CD4-positive, alpha-beta T cell (primary cell): ENCODE measurements at regions of chr10 and their contacts with region 1.

Region 1: GRCh38 chr10:22340362-22341189 is 4.7 kb upstream of the SPAG6 start:
- DNase-seq: peak in 10 of 14 experiments; percentile 12 to 78 (median 49)
- ATAC-seq: peak; percentile 37
- H3K4me3 ChIP-seq: peak overlapping the region; percentile 67
- H3K4me3 Mint-ChIP-seq: peak overlapping the region; percentile 91
- H3K27ac ChIP-seq: no peak overlapping the region
- H3K27ac Mint-ChIP-seq: peak overlapping the region; percentile 89
- H3K4me1 ChIP-seq: peaks cover 38% of the 10 kb centered on the region
- H3K4me1 Mint-ChIP-seq: peaks cover 38% of the 10 kb centered on the region
- H3K27me3 ChIP-seq: peaks cover 61 to 98% of the 10 kb centered on the region in 2 experiments
- H3K27me3 Mint-ChIP-seq: peaks cover 86% of the 10 kb centered on the region
- CTCF ChIP-seq: no peak

Region 2: DNA sequence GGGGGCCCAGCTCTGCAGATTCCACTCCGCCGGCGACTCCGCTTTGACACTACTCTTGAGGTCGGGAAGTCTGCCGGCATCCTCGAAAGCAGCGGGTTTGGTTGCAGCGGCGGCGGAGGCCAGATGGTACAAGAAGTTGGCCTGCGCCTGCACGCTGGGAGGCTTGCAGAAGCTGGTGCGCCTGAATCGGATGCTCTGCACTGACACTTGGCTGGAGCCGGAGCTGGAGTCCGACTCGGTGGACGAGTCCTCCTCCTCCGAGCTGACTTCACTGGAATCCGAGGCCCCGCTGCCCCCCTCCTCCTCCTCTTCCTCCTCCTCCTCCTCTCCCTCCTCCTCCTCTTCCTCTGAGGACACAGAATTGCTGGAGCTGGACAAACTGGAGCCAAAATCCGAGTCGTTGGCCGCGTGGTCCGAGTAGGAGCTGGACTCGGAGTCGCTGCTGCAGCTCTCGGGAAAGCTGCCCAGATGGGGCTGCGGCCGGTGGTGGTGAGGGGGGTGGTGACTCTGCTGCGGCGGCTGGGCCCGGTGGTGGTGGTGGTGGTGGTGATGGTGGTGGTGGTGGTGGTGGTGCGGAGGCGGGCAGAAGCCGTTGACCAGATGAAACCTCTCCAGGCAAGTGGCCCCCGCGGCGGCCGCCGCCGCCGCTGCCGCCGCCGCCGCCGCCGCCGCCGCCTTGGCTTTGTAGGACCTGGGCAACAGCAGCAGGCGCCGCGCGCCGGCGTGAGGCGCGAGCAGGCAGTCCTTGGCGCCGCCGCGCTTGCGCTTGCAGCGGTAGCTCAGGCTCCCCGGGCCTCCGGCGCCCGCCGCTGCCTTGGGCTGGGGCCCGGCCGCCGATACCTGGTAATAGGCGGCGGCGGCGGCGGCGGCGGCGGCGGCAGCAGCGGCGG is 824.1 kb before region 1 on chr10:
- CTCF ChIA-PET with region 1: no interaction called
- POLR2A ChIA-PET with region 1: no interaction called
- intact Hi-C with region 1: loop called in 1 of 2 experiments (anchors 5 kb)
- DNase-seq: peak in 9 of 14 experiments; percentile 31 to 83 (median 54)
- ATAC-seq: peak; percentile 66
- H3K4me3 ChIP-seq: peak overlapping the region; percentile 39
- H3K4me3 Mint-ChIP-seq: peak overlapping the region; percentile 77
- H3K27ac ChIP-seq: no peak overlapping the region
- H3K27ac Mint-ChIP-seq: no peak overlapping the region
- H3K4me1 ChIP-seq: peaks cover 39% of the 10 kb centered on the region
- H3K4me1 Mint-ChIP-seq: peaks cover 44% of the 10 kb centered on the region
- H3K27me3 ChIP-seq: peaks cover 58 to 84% of the 10 kb centered on the region in 2 experiments
- H3K27me3 Mint-ChIP-seq: peaks cover 92% of the 10 kb centered on the region
- CTCF ChIP-seq: no peak

Region 3: GRCh38 chr10:22251751-22252223 is 88.8 kb before region 1 on chr10:
- CTCF ChIA-PET with region 1: interaction called, 3 read pairs
- POLR2A ChIA-PET with region 1: interaction called, 10 read pairs
- intact Hi-C with region 1: loop called in 1 of 2 experiments (anchors 5 kb)
- DNase-seq: peak; percentile 46 to 82 (median 66)
- ATAC-seq: peak; percentile 57
- H3K4me3 ChIP-seq: peak overlapping the region; percentile 76
- H3K4me3 Mint-ChIP-seq: peak overlapping the region; percentile 96
- H3K27ac ChIP-seq: peak overlapping the region; percentile 71 to 76
- H3K27ac Mint-ChIP-seq: peak overlapping the region; percentile 97
- H3K4me1 ChIP-seq: peaks cover 10% of the 10 kb centered on the region
- H3K4me1 Mint-ChIP-seq: peaks cover 56% of the 10 kb centered on the region
- H3K27me3 ChIP-seq: peaks cover 0 to 7% of the 10 kb centered on the region in 2 experiments
- H3K27me3 Mint-ChIP-seq: peaks cover 22% of the 10 kb centered on the region
- CTCF ChIP-seq: no peak